ENCODE measurements at regions of chr2 and their contacts with region 1.

Region 1: GRCh38 chr2:200376513-200377354 is 70.2 kb downstream of the SPATS2L start:
- DNase-seq: peak; percentile 70 to 88
- H3K4me3 ChIP-seq: peak overlapping the region; percentile 59; the same call in 1 of the 2 replicates
- H3K27ac ChIP-seq: peak overlapping the region; percentile 96
- H3K4me1 ChIP-seq: peaks cover 100% of the 10 kb centered on the region
- H3K27me3 ChIP-seq: no peaks in the 10 kb centered on the region
- CTCF ChIP-seq: no peak

Region 2: DNA sequence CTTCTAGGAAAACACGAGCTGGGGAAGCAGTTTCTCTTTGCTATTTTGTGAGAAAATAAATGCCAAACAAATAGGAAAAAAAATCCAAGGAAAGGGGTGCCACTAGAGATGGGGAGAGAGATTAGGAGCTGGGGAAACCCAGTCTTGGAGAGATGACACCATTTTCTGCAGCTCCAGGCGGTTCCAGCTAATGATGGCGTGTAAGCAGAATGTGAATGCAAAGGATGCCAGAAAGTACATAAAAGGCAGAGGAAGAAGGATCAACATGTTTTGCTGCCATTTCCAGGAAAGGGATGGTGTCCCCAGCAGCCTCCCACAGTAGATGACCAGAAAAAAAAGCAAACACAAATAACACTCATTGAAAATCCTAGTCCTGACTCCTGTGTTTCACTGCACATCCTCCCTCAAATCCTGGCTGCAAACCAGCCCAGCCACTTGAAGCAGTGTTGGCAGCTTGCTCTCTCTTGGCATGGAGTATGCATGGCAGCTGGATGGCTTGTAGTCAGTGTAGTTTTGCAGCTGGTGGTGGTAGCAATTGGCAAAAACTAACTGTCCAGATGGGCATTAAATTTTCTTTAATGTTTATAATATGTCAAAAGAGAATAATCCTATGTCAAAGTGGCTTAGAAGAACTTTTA is 619.4 kb before region 1 on chr2:
- CTCF ChIA-PET with region 1: no interaction called
- POLR2A ChIA-PET with region 1: no interaction called
- intact Hi-C with region 1: no loop called
- DNase-seq: no peak
- H3K4me3 ChIP-seq: no peak overlapping the region
- H3K27ac ChIP-seq: no peak overlapping the region
- H3K4me1 ChIP-seq: no peaks in the 10 kb centered on the region
- H3K27me3 ChIP-seq: no peaks in the 10 kb centered on the region
- CTCF ChIP-seq: no peak

Region 3: DNA sequence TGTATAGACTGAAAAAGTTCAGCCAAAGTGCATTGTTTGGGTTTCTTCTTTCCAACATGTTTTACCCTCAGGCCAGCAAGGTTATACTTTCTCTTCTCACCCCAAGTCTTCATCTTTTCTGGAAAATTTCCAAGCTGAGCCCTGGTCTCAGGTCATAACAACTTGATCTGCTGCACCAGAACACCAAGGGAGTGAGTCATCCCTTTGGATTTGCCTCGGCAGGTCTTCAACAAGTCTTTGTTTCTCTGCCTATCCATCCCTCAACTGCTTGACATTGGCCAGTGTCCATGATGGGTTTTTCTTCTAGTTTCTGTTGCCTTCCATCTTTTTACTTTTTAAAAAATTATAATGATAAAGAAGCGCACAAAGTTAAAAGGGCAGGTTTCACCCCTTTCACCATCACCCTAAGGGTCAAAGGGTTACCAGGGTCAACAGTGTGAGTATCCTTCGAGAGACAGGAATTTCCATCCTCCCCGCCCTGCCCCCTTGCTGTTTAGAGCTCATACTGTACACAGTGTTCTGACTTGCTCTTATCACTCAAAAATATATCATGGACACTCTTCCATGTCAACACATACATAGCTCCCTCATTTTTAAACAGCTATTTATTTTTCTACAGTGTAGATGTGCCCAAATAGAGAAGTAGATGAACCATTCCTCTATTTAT is 76.0 kb before region 1 on chr2:
- CTCF ChIA-PET with region 1: interaction called, 3 read pairs
- POLR2A ChIA-PET with region 1: interaction called, 4 read pairs
- intact Hi-C with region 1: loop called (anchors 2 kb)
- DNase-seq: peak; percentile 73 to 92
- H3K4me3 ChIP-seq: no peak overlapping the region
- H3K27ac ChIP-seq: peak overlapping the region; percentile 53
- H3K4me1 ChIP-seq: peaks cover 54% of the 10 kb centered on the region
- H3K27me3 ChIP-seq: no peaks in the 10 kb centered on the region
- CTCF ChIP-seq: no peak

Region 4: DNA sequence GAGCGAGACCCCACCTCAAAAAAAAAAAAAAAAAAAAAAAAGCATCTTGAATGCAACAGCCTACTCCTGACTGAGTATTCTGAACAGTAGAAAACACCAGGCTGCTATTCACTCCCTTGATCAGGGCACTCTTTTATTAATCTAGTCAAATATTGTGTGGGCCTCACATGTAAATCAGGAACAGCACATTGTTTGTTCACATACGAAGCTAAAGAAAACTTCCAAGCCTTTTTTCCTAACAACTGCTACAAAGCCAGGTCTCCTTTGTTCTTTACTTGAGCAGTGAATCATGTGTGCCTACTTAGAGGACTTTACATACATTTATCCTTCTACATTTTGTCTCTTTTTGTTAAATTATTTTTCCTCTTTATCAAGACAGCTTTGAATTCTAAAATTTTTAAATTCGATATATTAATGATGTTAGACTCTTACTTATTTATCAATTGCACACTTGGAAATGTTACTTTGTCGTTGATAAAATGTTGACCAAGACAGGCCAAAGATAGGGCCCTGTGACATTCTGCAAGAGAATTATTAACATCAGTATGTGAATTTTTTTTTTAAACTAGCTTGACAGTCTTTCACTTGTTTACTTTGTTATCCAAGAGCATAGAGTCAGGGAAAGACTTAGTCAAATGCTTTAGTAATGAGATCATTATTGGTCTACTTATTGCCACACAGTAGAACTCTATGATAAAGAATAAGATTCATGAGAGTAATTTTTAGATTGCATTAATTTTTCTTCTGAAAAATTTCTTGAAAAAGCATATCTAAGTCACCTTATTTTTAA is 57.0 kb before region 1 on chr2:
- CTCF ChIA-PET with region 1: no interaction called
- POLR2A ChIA-PET with region 1: interaction called, 5 read pairs
- intact Hi-C with region 1: loop called (anchors 2 kb)
- DNase-seq: peak in 1 of 2 experiments; percentile 86
- H3K4me3 ChIP-seq: 0 out of 2 replicates have a peak overlapping the region, but pooled peaks have one; percentile 31
- H3K27ac ChIP-seq: peak overlapping the region; percentile 89
- H3K4me1 ChIP-seq: peaks cover 79% of the 10 kb centered on the region
- H3K27me3 ChIP-seq: no peaks in the 10 kb centered on the region
- CTCF ChIP-seq: no peak

Region 5: GRCh38 chr2:200352636-200353035 is 24.1 kb before region 1 on chr2:
- CTCF ChIA-PET with region 1: no interaction called
- POLR2A ChIA-PET with region 1: interaction called, 3 read pairs
- intact Hi-C with region 1: loop called (anchors 2 kb)
- DNase-seq: peak; percentile 49 to 85
- H3K4me3 ChIP-seq: no peak overlapping the region
- H3K27ac ChIP-seq: peak overlapping the region; percentile 66
- H3K4me1 ChIP-seq: peaks cover 45% of the 10 kb centered on the region
- H3K27me3 ChIP-seq: no peaks in the 10 kb centered on the region
- CTCF ChIP-seq: no peak

Region 6: DNA sequence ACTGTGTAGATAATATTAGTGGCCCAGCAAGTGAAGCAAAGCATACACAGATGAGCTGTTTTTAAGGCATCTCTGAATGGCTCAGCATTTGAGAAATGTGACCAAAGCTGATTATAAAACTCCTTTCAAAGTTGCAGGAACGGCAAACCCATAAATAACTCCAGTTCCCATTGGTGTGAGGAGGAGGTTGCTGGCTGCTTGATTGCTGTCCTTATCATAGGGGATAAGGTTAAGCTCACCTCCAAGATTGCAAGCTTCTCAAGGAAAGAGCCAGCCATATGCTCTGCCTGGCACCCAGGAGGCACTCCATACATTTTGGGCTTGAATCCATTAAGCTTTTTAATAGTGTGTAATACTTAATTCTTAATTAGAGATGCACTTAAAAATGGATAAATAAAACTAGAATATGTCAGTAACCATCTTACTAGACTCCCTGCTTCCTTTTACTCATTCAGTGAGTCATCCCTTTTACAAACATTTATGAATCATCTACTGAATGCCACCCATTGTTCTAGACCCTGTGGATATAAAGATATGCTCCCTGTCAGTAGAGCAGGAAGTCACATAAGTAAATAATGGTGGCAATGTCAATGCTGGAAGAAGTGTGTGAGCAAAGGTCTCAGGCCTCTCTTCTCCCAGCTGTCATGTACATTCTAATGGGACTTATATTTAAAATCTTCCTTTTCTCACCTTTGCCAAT is 29.0 kb after region 1 on chr2:
- CTCF ChIA-PET with region 1: no interaction called
- POLR2A ChIA-PET with region 1: no interaction called
- intact Hi-C with region 1: loop called (anchors 1 kb)
- DNase-seq: peak; percentile 57 to 99
- H3K4me3 ChIP-seq: peak overlapping the region; percentile 30; the same call in 1 of the 2 replicates
- H3K27ac ChIP-seq: peak overlapping the region; percentile 92
- H3K4me1 ChIP-seq: peaks cover 75% of the 10 kb centered on the region
- H3K27me3 ChIP-seq: no peaks in the 10 kb centered on the region
- CTCF ChIP-seq: no peak

Measured in PC-9 (cell line).